Activated CD4-positive, alpha-beta memory T cell treated with anti-CD3 and anti-CD28 coated beads for 36 hours (primary cell): ENCODE measurements at regions of chr12 and their contacts with region 1.

Region 1: GRCh38 chr12:71626098-71626497 is 37.5 kb downstream of the ZFC3H1 start:
- DNase-seq: no peak
- H3K4me3 Mint-ChIP-seq: no peak overlapping the region
- H3K27ac Mint-ChIP-seq: peak overlapping the region; percentile 33
- H3K4me1 Mint-ChIP-seq: peaks cover 10% of the 10 kb centered on the region
- H3K27me3 Mint-ChIP-seq: no peaks in the 10 kb centered on the region

Region 2: DNA sequence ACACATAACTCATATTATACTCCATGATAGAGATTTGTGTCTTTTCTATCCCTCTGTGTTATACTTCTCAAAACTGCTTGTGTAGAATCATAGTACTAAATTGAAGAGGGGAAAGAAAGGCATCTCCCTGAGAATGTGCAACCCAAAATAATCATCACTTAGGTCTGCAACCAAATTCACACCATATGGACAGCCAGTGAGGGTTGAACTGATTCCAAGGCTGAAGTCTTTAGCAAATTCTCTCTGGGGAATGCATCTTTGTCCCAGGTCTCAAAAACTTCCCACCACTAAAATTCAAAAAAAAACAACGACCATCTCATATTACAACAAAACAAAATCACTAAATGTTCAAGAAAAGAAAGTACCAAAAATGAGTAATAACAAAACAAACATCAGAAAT is 26.6 kb after region 1 on chr12:
- CTCF ChIA-PET with region 1: interaction called, 3 read pairs
- POLR2A ChIA-PET with region 1: no interaction called
- intact Hi-C with region 1: loop called (anchors 5 kb)
- DNase-seq: no peak
- H3K4me3 Mint-ChIP-seq: no peak overlapping the region
- H3K27ac Mint-ChIP-seq: no peak overlapping the region
- H3K4me1 Mint-ChIP-seq: peaks cover 42% of the 10 kb centered on the region
- H3K27me3 Mint-ChIP-seq: no peaks in the 10 kb centered on the region